B cell (primary cell): ENCODE measurements at regions of chr18 and their contacts with region 1.

Region 1: GRCh38 chr18:50307738-50308470 is 20.4 kb upstream of the CXXC1 start:
- DNase-seq: peak; percentile 92
- ATAC-seq: peak; percentile 98
- H3K4me3 ChIP-seq: peak overlapping the region; percentile 30 to 70 (median 61)
- H3K4me3 Mint-ChIP-seq: peak overlapping the region; percentile 99
- H3K27ac ChIP-seq: peak overlapping the region; percentile 3 to 56
- H3K27ac Mint-ChIP-seq: peak overlapping the region; percentile 87
- H3K4me1 ChIP-seq: peaks cover 33 to 42% of the 10 kb centered on the region in 2 donors
- H3K4me1 Mint-ChIP-seq: peaks cover 38% of the 10 kb centered on the region
- H3K27me3 ChIP-seq: peaks cover 0 to 2% (median 0%) of the 10 kb centered on the region in 4 experiments
- H3K27me3 Mint-ChIP-seq: peaks cover 4% of the 10 kb centered on the region
- CTCF ChIP-seq: no peak

Region 2: DNA sequence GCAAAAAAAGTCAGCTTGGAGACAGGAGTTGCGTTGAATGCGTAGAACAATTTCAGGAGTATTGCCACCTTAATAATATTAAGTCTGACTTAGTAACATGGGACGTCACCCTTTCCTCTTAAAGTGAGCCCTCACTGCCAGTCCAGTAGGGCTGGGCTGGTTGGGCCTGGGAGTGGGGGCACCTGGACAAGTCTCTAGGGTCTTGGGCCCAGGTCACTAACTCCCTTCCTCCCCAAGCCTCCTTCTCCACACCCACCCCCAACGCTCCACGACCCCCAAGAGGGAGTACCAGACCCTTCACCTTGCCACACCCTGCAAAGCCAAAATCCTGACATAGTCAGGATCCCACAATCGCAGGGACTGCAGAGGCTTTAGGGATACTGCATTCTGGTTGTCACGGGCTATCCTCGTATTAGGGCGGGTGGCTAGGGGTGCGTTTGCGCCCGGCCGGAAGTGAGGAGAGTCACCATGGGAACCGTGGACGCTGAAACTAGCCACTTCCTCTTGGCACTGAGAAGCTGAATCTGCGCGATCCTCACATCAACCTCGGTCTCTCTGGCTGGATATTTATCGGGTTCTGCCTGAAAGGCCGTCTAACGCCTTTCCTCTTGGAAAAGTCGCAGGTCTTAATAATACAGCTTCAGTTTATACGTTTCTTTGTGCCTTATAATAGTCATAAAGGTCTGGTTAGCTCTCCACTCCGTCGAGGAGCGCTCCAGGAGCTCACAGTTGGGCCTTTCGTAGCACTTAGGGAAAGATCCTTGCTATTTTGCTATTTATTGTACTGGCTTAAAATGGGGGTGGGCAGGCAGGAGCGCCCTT is 10.1 kb before region 1 on chr18:
- CTCF ChIA-PET with region 1: interaction called, 10 read pairs
- POLR2A ChIA-PET with region 1: interaction called, 3 read pairs
- intact Hi-C with region 1: loop called (anchors 1 kb)
- DNase-seq: peak; percentile 92
- ATAC-seq: peak; percentile 98
- H3K4me3 ChIP-seq: peak overlapping the region; percentile 31 to 50 (median 47)
- H3K4me3 Mint-ChIP-seq: peak overlapping the region; percentile 88
- H3K27ac ChIP-seq: no peak overlapping the region
- H3K27ac Mint-ChIP-seq: peak overlapping the region; percentile 77
- H3K4me1 ChIP-seq: peaks cover 13 to 14% of the 10 kb centered on the region in 2 donors
- H3K4me1 Mint-ChIP-seq: peaks cover 13% of the 10 kb centered on the region
- H3K27me3 ChIP-seq: peaks cover 0 to 5% (median 2%) of the 10 kb centered on the region in 4 experiments
- H3K27me3 Mint-ChIP-seq: peaks cover 7% of the 10 kb centered on the region
- CTCF ChIP-seq: no peak

Region 3: GRCh38 chr18:50836521-50836957 is 528.6 kb after region 1 on chr18:
- CTCF ChIA-PET with region 1: no interaction called
- POLR2A ChIA-PET with region 1: no interaction called
- intact Hi-C with region 1: no loop called
- DNase-seq: peak; percentile 41
- ATAC-seq: peak; percentile 76
- H3K4me3 ChIP-seq: peak overlapping the region in 1 of 5 experiments; percentile 29
- H3K4me3 Mint-ChIP-seq: peak overlapping the region; percentile 69
- H3K27ac ChIP-seq: no peak overlapping the region
- H3K27ac Mint-ChIP-seq: peak overlapping the region; percentile 59
- H3K4me1 ChIP-seq: peaks cover 16 to 19% of the 10 kb centered on the region in 2 donors
- H3K4me1 Mint-ChIP-seq: peaks cover 33% of the 10 kb centered on the region
- H3K27me3 ChIP-seq: peaks cover 0 to 3% (median 0%) of the 10 kb centered on the region in 4 experiments
- H3K27me3 Mint-ChIP-seq: no peaks in the 10 kb centered on the region
- CTCF ChIP-seq: no peak